Psoas muscle (tissue), 8 donors: ENCODE measurements at regions of chr5 and their contacts with region 1.

Region 1: GRCh38 chr5:138226910-138227309 is 13.8 kb upstream of the CDC23 start:
- DNase-seq: no peak
- ATAC-seq: no peak
- H3K4me3 ChIP-seq: no peak overlapping the region
- H3K27ac ChIP-seq: no peak overlapping the region
- H3K4me1 ChIP-seq: no peaks in the 10 kb centered on the region
- H3K27me3 ChIP-seq: no peaks in the 10 kb centered on the region
- CTCF ChIP-seq: no peak

Region 2: GRCh38 chr5:138178516-138179276 is 48.2 kb before region 1 on chr5 and contains the starts of genes BRD8 and KIF20A:
- intact Hi-C with region 1: no loop called
- DNase-seq: peak; percentile 96 to 97
- ATAC-seq: peak; percentile 99
- H3K4me3 ChIP-seq: peak within 1 kb of the TSS; percentile 97
- H3K27ac ChIP-seq: peak within 1 kb of the TSS; percentile 92
- H3K4me1 ChIP-seq: peaks cover 12% of the 10 kb centered on the region
- H3K27me3 ChIP-seq: no peaks in the 10 kb centered on the region
- CTCF ChIP-seq: no peak
- total RNA-seq, gene BRD8: 21.9 to 30.6 (median 27.6) TPM
- total RNA-seq, gene KIF20A: 0.12 to 0.17 TPM in 2 of 4 donors, not detected in the others

Region 3: DNA sequence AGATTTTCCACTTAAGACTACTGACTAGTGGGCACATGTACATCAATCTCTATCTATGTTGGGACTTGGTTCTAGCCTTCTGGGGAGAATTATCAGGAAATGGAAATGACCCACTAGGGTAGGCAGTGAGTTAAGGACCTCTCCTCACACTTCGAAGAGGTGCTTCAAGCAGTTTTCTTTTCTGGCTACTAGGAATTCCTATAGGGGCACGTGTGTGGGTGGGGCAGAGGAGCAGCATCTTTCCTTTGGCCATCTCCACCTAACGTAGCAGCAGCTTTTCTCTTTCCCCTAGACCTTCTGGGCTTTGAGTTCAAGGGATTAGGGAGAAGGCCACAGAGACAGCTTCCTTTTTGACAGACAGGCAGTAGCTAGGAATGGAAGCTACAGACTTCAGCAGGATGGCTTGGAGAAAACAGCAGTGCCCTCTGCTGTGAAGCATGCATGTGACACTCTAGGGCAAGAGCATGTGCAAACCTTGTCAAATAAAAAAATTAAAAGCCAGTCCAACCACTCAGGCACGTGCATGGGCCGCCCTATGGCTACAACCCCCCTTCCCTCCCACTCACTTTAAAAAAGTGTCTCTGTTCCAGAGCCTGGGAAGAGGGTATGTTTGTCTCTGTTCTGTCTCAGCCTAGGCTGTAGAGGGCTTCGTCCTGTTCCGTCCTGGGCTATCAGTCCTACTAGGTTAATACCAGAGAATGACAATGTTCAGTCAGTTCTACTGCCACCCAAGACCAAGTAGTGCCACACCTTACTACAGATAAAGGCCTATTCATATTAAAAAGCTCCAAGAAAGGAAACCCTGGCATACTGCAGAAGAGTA is 56.2 kb after region 1 on chr5:
- intact Hi-C with region 1: loop called in 1 of 2 experiments (anchors 5 kb)
- DNase-seq: no peak
- ATAC-seq: peak in 3 of 4 donors; percentile 48 to 68 (median 56)
- H3K4me3 ChIP-seq: no peak overlapping the region
- H3K27ac ChIP-seq: no peak overlapping the region
- H3K4me1 ChIP-seq: no peaks in the 10 kb centered on the region
- H3K27me3 ChIP-seq: no peaks in the 10 kb centered on the region
- CTCF ChIP-seq: peak; percentile 44

Region 4: DNA sequence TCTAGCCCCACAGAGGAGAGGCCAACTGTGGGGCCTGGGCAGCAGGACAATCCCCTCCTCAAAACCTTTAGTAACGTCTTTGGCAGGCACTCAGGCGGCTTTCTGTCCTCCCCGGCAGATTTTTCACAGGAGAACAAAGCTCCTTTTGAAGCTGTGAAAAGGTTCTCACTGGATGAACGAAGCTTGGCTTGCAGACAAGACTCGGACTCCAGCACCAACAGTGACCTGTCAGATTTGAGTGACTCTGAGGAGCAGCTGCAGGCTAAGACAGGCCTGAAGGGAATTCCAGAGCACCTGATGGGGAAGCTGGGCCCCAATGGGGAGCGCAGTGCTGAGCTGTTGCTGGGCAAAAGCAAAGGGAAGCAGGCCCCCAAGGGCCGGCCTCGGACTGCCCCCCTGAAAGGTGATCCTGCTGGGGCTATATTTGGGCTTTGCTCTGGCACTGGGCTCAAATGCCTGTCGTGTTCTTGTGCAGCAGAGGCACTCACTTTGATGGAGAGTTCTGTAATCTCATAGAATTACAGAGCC is 165.0 kb after region 1 on chr5:
- intact Hi-C with region 1: no loop called
- DNase-seq: peak; percentile 39 to 76
- ATAC-seq: peak; percentile 84 to 91 (median 90)
- H3K4me3 ChIP-seq: peak overlapping the region; percentile 45
- H3K27ac ChIP-seq: peak overlapping the region; percentile 70
- H3K4me1 ChIP-seq: peaks cover 45% of the 10 kb centered on the region
- H3K27me3 ChIP-seq: no peaks in the 10 kb centered on the region
- CTCF ChIP-seq: no peak

Region 5: DNA sequence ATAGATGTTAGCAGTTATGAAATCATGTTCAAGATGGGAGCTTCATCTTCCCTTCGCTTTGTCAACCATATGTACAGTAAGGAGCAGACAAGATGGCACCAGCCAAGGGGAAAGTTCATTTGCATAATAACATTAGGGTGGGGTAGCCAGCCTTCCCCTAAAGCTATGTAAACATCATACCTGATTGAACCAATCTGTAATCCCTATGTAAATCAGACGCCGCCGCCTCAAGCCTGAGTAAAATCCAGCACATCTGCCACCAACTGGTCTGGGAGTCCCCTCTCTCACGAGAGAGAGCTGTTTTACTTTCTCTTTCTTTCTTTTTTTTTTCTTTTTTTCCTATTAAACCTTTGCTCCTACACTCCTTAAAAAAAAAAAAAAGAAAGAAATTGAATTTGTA is 181.1 kb after region 1 on chr5:
- intact Hi-C with region 1: loop called (anchors 10 kb)
- DNase-seq: no peak
- ATAC-seq: no peak
- H3K4me3 ChIP-seq: no peak overlapping the region
- H3K27ac ChIP-seq: no peak overlapping the region
- H3K4me1 ChIP-seq: no peaks in the 10 kb centered on the region
- H3K27me3 ChIP-seq: no peaks in the 10 kb centered on the region
- CTCF ChIP-seq: no peak

Region 6: DNA sequence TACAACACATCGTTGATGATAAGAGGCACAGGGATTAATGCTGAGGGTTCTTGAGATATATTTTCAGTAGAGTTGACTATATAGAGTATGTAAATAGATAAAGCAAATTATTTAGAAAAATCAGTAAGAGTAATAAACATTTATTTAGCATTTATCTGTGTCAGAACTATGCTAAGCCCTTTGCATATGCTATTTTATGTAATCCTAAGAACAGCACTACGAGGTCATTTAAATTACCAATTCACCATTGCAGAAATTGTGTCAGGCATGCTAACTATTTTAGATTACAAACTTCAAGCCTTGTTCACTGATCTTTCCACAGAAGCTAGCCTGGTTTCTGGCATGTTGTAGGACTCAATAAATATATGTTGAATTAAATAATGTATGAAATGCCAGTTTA is 191.5 kb after region 1 on chr5:
- intact Hi-C with region 1: loop called in 1 of 2 experiments (anchors 10 kb)
- DNase-seq: no peak
- ATAC-seq: no peak
- H3K4me3 ChIP-seq: no peak overlapping the region
- H3K27ac ChIP-seq: no peak overlapping the region
- H3K4me1 ChIP-seq: no peaks in the 10 kb centered on the region
- H3K27me3 ChIP-seq: no peaks in the 10 kb centered on the region
- CTCF ChIP-seq: no peak

Region 7: GRCh38 chr5:138491669-138492559 is 265.0 kb after region 1 on chr5:
- intact Hi-C with region 1: loop called in 1 of 2 experiments (anchors 10 kb)
- DNase-seq: peak; percentile 94 to 96
- ATAC-seq: peak; percentile 96 to 98 (median 98)
- H3K4me3 ChIP-seq: peak overlapping the region; percentile 78
- H3K27ac ChIP-seq: peak overlapping the region; percentile 61
- H3K4me1 ChIP-seq: peaks cover 10% of the 10 kb centered on the region
- H3K27me3 ChIP-seq: peaks cover 0 to 15% (median 2%) of the 10 kb centered on the region in 3 donors
- CTCF ChIP-seq: no peak